SK-N-SH (cell line): ENCODE measurements at regions of chr2 and their contacts with region 1.

Region 1: GRCh38 chr2:119659601-119660342 is 19.2 kb upstream of the TMEM177 start:
- DNase-seq: peak; percentile 51
- H3K4me3 ChIP-seq: no peak overlapping the region
- H3K27ac ChIP-seq: no peak overlapping the region
- H3K4me1 ChIP-seq: no peaks in the 10 kb centered on the region
- H3K27me3 ChIP-seq: no peaks in the 10 kb centered on the region
- CTCF ChIP-seq: peak; percentile 88
- EP300 ChIP-seq: no peak
- RAD21 ChIP-seq: peak; percentile 85

Region 2: GRCh38 chr2:119508756-119509155 is 151.0 kb before region 1 on chr2:
- CTCF ChIA-PET with region 1: no interaction called
- POLR2A ChIA-PET with region 1: no interaction called
- DNase-seq: no peak
- H3K4me3 ChIP-seq: no peak overlapping the region
- H3K27ac ChIP-seq: no peak overlapping the region
- H3K4me1 ChIP-seq: no peaks in the 10 kb centered on the region
- H3K27me3 ChIP-seq: no peaks in the 10 kb centered on the region
- CTCF ChIP-seq: no peak
- EP300 ChIP-seq: no peak
- RAD21 ChIP-seq: no peak

Region 3: GRCh38 chr2:119647440-119648169 is 12.2 kb before region 1 on chr2:
- CTCF ChIA-PET with region 1: interaction called, 34 read pairs
- POLR2A ChIA-PET with region 1: no interaction called
- DNase-seq: no peak
- H3K4me3 ChIP-seq: no peak overlapping the region
- H3K27ac ChIP-seq: no peak overlapping the region
- H3K4me1 ChIP-seq: peaks cover 0 to 4% of the 10 kb centered on the region in 2 experiments; a peak in 2 of 4 replicates
- H3K27me3 ChIP-seq: no peaks in the 10 kb centered on the region
- CTCF ChIP-seq: no peak
- EP300 ChIP-seq: no peak
- RAD21 ChIP-seq: no peak